PC-3 (cell line): ENCODE measurements at regions of chr18 and their contacts with region 1.

Region 1: GRCh38 chr18:51009072-51009471 is 20.9 kb upstream of the SMAD4 start:
- DNase-seq: peak; percentile 5
- ATAC-seq: no peak
- H3K4me3 ChIP-seq: no peak overlapping the region
- H3K27ac ChIP-seq: no peak overlapping the region
- H3K4me1 ChIP-seq: no peaks in the 10 kb centered on the region
- H3K27me3 ChIP-seq: no peaks in the 10 kb centered on the region
- CTCF ChIP-seq: no peak

Region 2: GRCh38 chr18:50866765-50867164 is 142.3 kb before region 1 on chr18:
- CTCF ChIA-PET with region 1: interaction called, 12 read pairs
- POLR2A ChIA-PET with region 1: no interaction called
- intact Hi-C with region 1: no loop called
- DNase-seq: peak; percentile 14
- ATAC-seq: peak; percentile 26; the same call in 1 of the 2 replicates
- H3K4me3 ChIP-seq: no peak overlapping the region
- H3K27ac ChIP-seq: no peak overlapping the region
- H3K4me1 ChIP-seq: peaks cover 17% of the 10 kb centered on the region
- H3K27me3 ChIP-seq: no peaks in the 10 kb centered on the region
- CTCF ChIP-seq: peak; percentile 38; the same call in 1 of the 2 replicates